PC-3 (cell line): ENCODE measurements at regions of chr9 and their contacts with region 1.

Region 1: DNA sequence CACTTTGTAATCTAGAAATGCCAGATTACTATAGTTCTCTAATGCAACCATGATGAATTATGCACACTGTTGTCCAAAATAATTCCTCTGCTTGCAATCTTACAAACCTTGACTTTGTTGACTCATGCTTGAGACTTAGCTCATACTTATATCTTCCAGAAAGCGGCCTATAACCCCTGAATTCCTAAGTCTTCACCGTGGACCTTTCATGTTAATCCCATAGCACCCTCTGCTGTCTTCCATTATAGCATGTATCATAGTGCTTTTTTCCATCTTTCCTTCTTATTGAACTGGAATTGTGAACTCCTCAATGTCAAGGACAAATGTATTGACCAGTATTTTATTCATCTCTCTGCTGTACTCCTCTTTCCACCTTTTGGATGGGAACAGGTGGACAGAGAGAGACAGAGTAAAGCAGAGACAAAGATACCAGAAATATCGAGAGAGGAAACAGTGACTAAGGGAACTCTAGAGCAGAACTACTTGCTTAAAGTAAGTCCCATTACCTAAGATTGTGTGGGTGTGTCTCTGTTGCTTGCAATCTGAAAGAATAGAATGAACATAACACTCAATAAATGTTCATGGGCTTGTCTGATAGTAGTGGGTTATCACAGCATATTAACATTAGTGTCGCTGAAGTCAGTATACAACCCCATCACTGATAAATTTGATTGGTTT is 110.1 kb downstream of the LURAP1L start:
- DNase-seq: peak; percentile 84
- ATAC-seq: peak; percentile 89
- H3K4me3 ChIP-seq: no peak overlapping the region
- H3K27ac ChIP-seq: peak overlapping the region; percentile 44; the same call in 1 of the 2 replicates
- H3K4me1 ChIP-seq: peaks cover 18% of the 10 kb centered on the region
- H3K27me3 ChIP-seq: no peaks in the 10 kb centered on the region
- CTCF ChIP-seq: peak; percentile 82

Region 2: GRCh38 chr9:12719431-12719830 is 165.4 kb before region 1 on chr9:
- CTCF ChIA-PET with region 1: interaction called, 14 read pairs
- POLR2A ChIA-PET with region 1: interaction called, 4 read pairs
- intact Hi-C with region 1: loop called (anchors 1 kb)
- DNase-seq: peak; percentile 45
- ATAC-seq: no peak
- H3K4me3 ChIP-seq: no peak overlapping the region
- H3K27ac ChIP-seq: no peak overlapping the region
- H3K4me1 ChIP-seq: peaks cover 17% of the 10 kb centered on the region
- H3K27me3 ChIP-seq: no peaks in the 10 kb centered on the region
- CTCF ChIP-seq: peak; percentile 66

Region 3: DNA sequence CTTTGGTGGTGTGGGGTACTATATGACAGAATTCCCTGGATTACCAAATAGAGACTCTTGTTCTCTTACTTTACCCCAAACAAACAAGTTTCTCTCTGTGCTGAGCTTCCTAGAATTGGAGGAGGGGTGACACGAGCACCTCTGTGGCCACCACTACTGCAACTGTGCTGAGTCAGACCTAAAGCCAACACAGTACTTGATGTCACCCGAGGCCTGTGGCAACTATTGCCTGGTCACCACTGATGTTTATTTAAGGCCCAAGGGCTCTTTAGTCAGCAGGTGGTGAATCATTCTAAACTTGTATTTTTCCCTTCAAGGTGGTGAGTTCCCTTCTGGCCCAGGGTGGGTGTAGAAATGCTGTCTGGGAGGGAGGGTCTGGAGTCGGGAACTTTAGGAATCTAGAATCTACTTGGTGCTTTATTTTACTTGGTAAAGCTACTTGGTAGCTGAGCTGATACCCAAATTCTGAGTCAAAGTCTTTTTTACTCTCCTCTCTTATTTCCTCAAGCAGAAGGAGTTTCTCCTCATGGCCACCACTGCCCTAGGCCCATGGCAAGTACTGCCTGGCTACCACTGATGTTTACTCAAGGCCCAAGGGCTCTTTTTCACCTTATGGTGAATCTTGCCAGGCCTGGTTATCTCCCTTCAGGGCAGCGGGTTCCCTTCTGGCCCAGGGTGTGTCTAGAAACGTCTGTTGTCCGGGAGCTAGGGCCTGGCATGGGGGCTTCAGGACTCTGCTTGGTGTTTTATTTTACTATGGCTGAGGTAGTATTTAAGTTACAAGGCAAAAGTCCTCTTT is 100.2 kb before region 1 on chr9:
- CTCF ChIA-PET with region 1: no interaction called
- POLR2A ChIA-PET with region 1: interaction called, 7 read pairs
- intact Hi-C with region 1: loop called (anchors 2 kb)
- DNase-seq: peak; percentile 96
- ATAC-seq: peak; percentile 93
- H3K4me3 ChIP-seq: peak overlapping the region; percentile 60
- H3K27ac ChIP-seq: peak overlapping the region; percentile 100
- H3K4me1 ChIP-seq: peaks cover 34% of the 10 kb centered on the region
- H3K27me3 ChIP-seq: no peaks in the 10 kb centered on the region
- CTCF ChIP-seq: no peak

Region 4: GRCh38 chr9:12849486-12850004 is 35.3 kb before region 1 on chr9:
- CTCF ChIA-PET with region 1: no interaction called
- POLR2A ChIA-PET with region 1: interaction called, 3 read pairs
- intact Hi-C with region 1: loop called (anchors 5 kb)
- DNase-seq: peak; percentile 39
- ATAC-seq: peak; percentile 61
- H3K4me3 ChIP-seq: no peak overlapping the region
- H3K27ac ChIP-seq: peak overlapping the region; percentile 86
- H3K4me1 ChIP-seq: peaks cover 34% of the 10 kb centered on the region
- H3K27me3 ChIP-seq: no peaks in the 10 kb centered on the region
- CTCF ChIP-seq: no peak

Region 5: DNA sequence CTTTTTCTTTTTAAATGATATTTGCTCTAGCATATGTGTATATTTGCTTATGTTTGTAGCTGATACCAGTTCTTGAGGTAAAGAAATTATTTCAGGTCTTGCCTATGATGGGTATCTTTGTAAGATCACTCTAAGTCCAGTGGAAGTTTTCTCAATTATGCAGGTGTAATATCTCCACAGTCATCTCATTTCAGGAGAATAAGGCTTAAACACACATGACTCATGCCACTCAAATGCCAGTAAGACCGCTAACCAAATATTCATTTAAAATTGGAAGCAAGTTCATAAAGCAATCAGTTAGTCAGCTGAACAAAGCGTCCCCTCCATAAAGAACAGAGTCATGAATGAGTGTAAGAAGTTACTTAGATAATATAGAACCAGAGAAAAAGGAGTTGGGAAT is 138.6 kb after region 1 on chr9:
- CTCF ChIA-PET with region 1: no interaction called
- POLR2A ChIA-PET with region 1: no interaction called
- intact Hi-C with region 1: loop called (anchors 2 kb)
- DNase-seq: peak; percentile 89
- ATAC-seq: peak; percentile 97
- H3K4me3 ChIP-seq: no peak overlapping the region
- H3K27ac ChIP-seq: peak overlapping the region; percentile 39
- H3K4me1 ChIP-seq: peaks cover 18% of the 10 kb centered on the region
- H3K27me3 ChIP-seq: no peaks in the 10 kb centered on the region
- CTCF ChIP-seq: no peak